ENCODE measurements at regions of chr17 and their contacts with region 1.

Region 1: GRCh38 chr17:50478391-50479381 is at the start of gene RSAD1:
- DNase-seq: peak; percentile 90 to 97
- H3K4me3 ChIP-seq: peak within 1 kb of the TSS; percentile 70 to 78 (median 72)
- H3K27ac ChIP-seq: peak within 1 kb of the TSS; percentile 84 to 96 (median 94)
- H3K4me1 ChIP-seq: peaks cover 19 to 59% (median 47%) of the 10 kb centered on the region in 4 donors
- H3K27me3 ChIP-seq: no peaks in the 10 kb centered on the region
- CTCF ChIP-seq: peak in 5 of 7 experiments; percentile 68 to 87 (median 84)
- EP300 ChIP-seq: no peak
- POLR2A ChIP-seq: peak in 1 of 4 donors; percentile 34
- total RNA-seq, gene RSAD1: 18.7 to 54.8 (median 22.0) TPM

Region 2: DNA sequence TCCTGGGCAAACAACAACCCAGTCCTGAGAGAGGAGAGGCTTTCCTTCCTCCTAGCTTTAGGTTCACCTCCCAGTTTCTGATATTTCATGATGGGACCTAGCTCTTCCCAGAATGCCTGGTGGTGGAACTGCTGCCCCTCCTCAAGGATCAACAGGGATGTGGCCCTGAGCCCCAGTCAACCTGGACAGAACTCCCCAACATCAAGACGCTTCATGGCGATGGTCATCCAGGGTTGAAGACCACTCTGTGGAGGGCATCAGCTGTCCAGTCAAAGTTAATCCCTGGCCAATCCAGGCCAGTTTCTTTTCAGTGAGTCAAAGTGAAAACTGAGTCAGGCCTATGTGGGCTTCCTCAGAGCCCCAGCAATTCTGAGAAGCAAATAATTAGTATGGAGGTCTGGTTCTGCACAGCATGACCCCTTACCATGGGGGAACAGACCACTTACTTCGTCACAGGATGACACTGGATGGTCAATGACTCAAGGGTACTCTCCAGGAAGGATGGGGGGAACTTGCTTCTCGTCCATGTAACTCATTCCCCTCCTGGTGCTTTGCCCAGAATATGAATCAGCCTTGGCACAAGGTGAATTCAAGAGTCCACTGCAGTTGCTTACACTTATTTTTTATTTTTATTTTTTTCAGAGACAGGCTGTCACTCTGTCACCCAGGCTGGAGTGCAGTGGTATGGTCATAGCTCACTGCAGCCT is 147.4 kb before region 1 on chr17:
- intact Hi-C with region 1: no loop called
- DNase-seq: no peak
- H3K4me3 ChIP-seq: no peak overlapping the region
- H3K27ac ChIP-seq: no peak overlapping the region
- H3K4me1 ChIP-seq: peaks cover 0 to 16% (median 2%) of the 10 kb centered on the region in 4 donors
- H3K27me3 ChIP-seq: no peaks in the 10 kb centered on the region
- CTCF ChIP-seq: no peak
- EP300 ChIP-seq: no peak
- POLR2A ChIP-seq: no peak

Region 3: DNA sequence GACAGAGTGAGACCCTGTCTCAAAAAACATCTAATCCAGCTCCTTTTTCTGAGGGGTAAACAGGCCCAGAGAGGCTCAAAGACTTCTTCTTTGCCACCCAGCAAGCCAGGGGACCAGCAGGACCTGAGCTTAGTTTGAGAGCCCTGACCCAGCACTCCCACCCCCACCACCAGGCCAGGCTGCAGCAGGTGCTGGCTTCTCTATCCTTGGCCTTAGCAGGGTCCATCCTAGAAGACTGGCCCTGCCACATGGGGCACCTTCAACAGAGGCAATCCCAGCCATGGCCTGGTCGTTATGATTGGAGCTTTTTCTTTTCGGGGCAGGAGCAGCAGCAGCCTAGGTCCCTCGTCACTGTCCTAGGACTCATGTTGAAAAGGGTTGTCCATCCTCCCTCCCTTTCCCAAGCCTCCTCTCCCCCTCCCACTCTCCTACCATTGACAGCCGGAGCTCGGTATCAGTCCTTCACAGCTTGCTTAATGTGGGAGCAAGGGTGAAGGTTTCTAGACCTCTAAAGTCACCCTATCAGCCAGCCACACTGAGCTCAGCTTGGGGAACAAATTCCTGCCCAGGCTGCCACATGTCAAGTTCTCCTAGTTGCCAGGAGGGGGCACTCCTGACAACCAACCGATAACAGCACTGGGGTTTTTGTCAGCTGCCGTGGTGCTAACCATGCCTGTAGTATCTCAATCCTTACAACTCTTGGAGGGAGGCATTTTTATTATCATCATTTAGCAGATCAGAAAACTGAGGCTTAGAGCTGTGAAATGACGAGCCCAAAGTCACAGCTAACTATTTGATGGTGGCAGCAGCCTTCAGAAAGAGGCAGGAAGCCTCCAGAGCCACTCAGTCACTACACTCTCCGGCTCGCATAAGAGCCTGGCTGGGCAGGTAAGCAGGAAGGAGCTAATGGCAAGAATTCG is 116.9 kb before region 1 on chr17:
- intact Hi-C with region 1: loop called (anchors 10 kb)
- DNase-seq: peak; percentile 73 to 91
- H3K4me3 ChIP-seq: no peak overlapping the region
- H3K27ac ChIP-seq: peak overlapping the region; percentile 13 to 73 (median 60)
- H3K4me1 ChIP-seq: peaks cover 28 to 63% (median 44%) of the 10 kb centered on the region in 4 donors
- H3K27me3 ChIP-seq: no peaks in the 10 kb centered on the region
- CTCF ChIP-seq: peak in 5 of 7 experiments; percentile 59 to 77 (median 75)
- EP300 ChIP-seq: no peak
- POLR2A ChIP-seq: peak in 1 of 4 donors; percentile 9

Region 4: DNA sequence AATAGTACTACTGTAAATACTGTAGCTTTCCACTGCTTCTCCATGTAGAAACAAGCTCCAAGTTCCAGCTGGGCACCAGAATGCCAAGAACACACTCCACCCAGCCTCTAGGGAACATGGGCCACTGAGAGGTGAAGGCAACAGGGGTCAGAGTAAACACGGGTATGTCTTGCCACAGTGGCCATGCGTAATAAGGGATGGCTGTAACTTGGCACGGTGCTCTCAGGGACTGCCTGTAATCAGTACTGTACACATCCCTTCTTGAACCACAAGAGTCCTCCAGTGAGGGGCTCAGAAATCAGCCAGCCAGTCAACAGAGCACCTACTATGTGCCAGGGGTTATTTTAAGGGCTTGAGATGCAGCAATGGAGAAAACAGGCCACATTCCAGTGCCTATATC is 92.2 kb before region 1 on chr17:
- intact Hi-C with region 1: no loop called
- DNase-seq: no peak
- H3K4me3 ChIP-seq: no peak overlapping the region
- H3K27ac ChIP-seq: no peak overlapping the region
- H3K4me1 ChIP-seq: peaks cover 2 to 30% (median 17%) of the 10 kb centered on the region in 4 donors
- H3K27me3 ChIP-seq: no peaks in the 10 kb centered on the region
- CTCF ChIP-seq: no peak
- EP300 ChIP-seq: no peak
- POLR2A ChIP-seq: no peak

Region 5: GRCh38 chr17:50443368-50443971 is 35.2 kb before region 1 on chr17:
- intact Hi-C with region 1: no loop called
- DNase-seq: no peak
- H3K4me3 ChIP-seq: no peak overlapping the region
- H3K27ac ChIP-seq: peak overlapping the region; percentile 45 to 67 (median 56)
- H3K4me1 ChIP-seq: peaks cover 35 to 88% (median 63%) of the 10 kb centered on the region in 4 donors
- H3K27me3 ChIP-seq: no peaks in the 10 kb centered on the region
- CTCF ChIP-seq: no peak
- EP300 ChIP-seq: no peak
- POLR2A ChIP-seq: no peak

Region 6: GRCh38 chr17:50534222-50534978 is 55.7 kb after region 1 on chr17:
- intact Hi-C with region 1: loop called (anchors 10 kb)
- DNase-seq: peak; percentile 83 to 90
- H3K4me3 ChIP-seq: peak overlapping the region; percentile 43 to 59 (median 53)
- H3K27ac ChIP-seq: peak overlapping the region; percentile 86 to 95 (median 91)
- H3K4me1 ChIP-seq: peaks cover 41 to 74% (median 71%) of the 10 kb centered on the region in 4 donors
- H3K27me3 ChIP-seq: peaks cover 0 to 53% (median 24%) of the 10 kb centered on the region in 3 donors
- CTCF ChIP-seq: peak in 4 of 7 experiments; percentile 15 to 57 (median 34)
- EP300 ChIP-seq: no peak
- POLR2A ChIP-seq: peak in 2 of 4 donors; percentile 7 to 19